A549 (cell line): ENCODE measurements at regions of chr15 and their contacts with region 1.

Region 1: DNA sequence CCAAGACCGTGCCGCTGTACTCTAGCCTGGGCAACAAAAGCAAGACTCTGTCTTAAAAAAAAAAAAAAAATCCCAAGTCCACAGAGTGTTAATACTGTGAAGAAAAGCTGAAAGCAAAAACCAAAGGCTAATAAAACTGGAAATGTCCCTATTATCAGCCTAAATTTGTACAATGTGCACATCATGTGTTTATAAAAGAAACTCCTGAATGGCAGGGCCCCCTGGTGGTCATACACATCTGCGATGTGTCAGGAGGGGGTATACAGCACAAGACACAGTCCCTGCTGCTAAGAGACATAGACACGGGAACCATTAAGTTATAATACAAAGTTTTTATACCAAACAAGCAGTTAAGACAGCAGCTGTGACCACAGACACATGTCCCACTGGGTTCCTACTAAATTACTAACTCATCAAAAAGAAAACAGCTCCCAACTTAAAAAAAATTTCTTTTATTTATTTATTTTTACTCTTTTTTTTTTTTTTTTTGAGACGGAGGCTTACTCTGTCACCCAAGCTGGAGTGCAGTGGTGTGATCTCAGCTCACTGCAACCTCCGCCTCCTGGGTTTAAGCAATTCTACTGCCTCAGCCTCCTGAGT is 31.0 kb downstream of the IDH2 start:
- DNase-seq: peak; percentile 84 to 89
- ATAC-seq: peak; percentile 76 to 87
- H3K4me3 ChIP-seq: no peak overlapping the region
- H3K27ac ChIP-seq: no peak overlapping the region
- H3K4me1 ChIP-seq: no peaks in the 10 kb centered on the region
- CTCF ChIP-seq: peak; percentile 89
- EP300 ChIP-seq: no peak
- POLR2A ChIP-seq: no peak
- RAD21 ChIP-seq: peak; percentile 74 to 87

Region 2: GRCh38 chr15:89740137-89740536 is 331.2 kb before region 1 on chr15:
- CTCF ChIA-PET with region 1: interaction called, 16 read pairs
- POLR2A ChIA-PET with region 1: no interaction called
- DNase-seq: peak; percentile 83 to 85
- ATAC-seq: peak; percentile 87 to 95
- H3K4me3 ChIP-seq: no peak overlapping the region
- H3K27ac ChIP-seq: peak overlapping the region in 1 of 2 experiments; percentile 36; a peak in 1 of 6 replicates
- H3K4me1 ChIP-seq: no peaks in the 10 kb centered on the region
- CTCF ChIP-seq: peak; percentile 96
- EP300 ChIP-seq: no peak
- POLR2A ChIP-seq: no peak
- RAD21 ChIP-seq: peak; percentile 89 to 95

Region 3: DNA sequence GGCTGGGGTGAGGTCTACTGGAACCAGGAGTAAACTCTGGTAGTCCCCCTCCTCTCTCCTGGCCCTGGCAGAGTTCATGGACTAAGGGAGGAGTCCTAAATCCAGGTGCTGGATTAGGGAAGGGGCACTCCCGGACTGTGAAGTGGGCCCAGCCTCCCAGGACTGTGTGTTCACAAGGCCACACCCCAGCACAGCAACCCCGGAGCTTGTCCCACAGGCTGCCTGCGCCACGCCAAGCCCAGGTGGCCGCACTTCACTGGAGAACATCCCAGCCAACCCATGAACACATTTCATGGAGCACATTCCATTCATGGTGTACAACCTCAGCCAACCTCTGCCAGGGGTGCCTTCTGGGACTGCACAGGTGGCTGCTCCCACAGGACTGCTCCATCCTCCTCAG is 166.8 kb before region 1 on chr15:
- CTCF ChIA-PET with region 1: interaction called, 60 read pairs
- POLR2A ChIA-PET with region 1: no interaction called
- DNase-seq: no peak
- ATAC-seq: no peak
- H3K4me3 ChIP-seq: no peak overlapping the region
- H3K27ac ChIP-seq: no peak overlapping the region
- H3K4me1 ChIP-seq: no peaks in the 10 kb centered on the region
- CTCF ChIP-seq: no peak
- EP300 ChIP-seq: no peak
- POLR2A ChIP-seq: no peak
- RAD21 ChIP-seq: no peak

Region 4: DNA sequence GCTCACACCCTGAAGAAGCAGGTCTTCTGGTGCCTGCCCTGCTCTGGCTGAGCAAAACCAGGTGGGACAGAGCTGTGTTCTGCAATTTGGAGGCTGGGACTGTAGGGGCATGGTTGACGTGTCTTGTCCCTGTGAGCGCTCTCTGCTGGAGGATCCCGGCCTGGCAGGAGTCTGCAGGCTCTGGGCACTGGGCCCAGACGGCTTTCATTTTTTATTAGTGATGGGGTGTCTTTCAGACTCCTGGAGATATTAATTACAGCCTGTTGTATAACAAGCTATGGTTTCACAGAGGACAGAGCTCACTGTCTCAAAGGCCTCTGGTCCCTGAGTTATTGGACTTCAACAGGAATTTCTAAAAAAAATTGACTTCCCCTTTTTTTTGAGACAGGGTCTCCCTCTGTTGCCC is 99.7 kb before region 1 on chr15:
- CTCF ChIA-PET with region 1: interaction called, 13 read pairs
- POLR2A ChIA-PET with region 1: no interaction called
- DNase-seq: peak; percentile 82 to 87
- ATAC-seq: peak; percentile 100
- H3K4me3 ChIP-seq: no peak overlapping the region
- H3K27ac ChIP-seq: no peak overlapping the region
- H3K4me1 ChIP-seq: no peaks in the 10 kb centered on the region
- CTCF ChIP-seq: peak; percentile 69
- EP300 ChIP-seq: no peak
- POLR2A ChIP-seq: no peak
- RAD21 ChIP-seq: peak; percentile 48 to 65

Region 5: DNA sequence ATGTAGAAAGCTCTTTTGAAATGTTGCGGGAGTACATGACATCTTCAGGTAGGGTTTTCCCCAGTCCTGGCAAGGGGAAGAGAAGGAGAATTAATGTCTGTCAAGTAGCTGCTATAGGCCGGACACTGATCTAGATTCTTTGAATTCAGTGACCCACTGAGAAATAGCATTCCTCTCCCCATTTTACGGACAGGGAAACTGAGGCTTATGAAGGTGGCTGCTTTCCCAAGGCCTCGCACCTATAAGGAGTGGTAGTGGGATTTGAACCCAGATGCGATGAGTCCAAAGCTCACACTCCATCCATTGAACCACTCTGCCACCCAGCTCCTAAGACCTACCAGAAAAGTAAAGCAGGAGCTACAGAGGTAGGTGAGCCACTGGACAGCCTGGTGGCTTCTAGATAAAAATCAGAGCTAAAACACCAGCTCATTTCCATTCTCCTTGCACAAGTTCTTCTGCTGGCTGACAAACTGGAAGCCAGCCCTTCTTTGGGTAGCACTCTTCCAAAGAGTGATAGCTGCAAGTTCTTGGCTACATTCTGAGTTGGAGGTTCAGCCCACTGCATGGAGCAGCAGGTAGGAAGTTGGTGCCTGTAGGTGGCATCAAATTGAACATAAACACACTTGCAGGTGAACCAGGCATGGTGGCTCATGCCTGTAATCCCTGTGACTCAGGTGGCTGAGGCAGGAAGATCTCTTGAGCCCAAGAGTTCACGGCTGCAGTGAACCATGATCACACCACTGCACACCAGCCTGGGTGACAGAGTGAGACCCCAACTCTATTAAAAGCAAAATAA is 48.2 kb before region 1 on chr15:
- CTCF ChIA-PET with region 1: interaction called, 12 read pairs
- POLR2A ChIA-PET with region 1: no interaction called
- DNase-seq: no peak
- ATAC-seq: no peak
- H3K4me3 ChIP-seq: no peak overlapping the region
- H3K27ac ChIP-seq: no peak overlapping the region
- H3K4me1 ChIP-seq: no peaks in the 10 kb centered on the region; the same call in 2 of the 3 replicates
- CTCF ChIP-seq: no peak
- EP300 ChIP-seq: no peak
- POLR2A ChIP-seq: no peak
- RAD21 ChIP-seq: no peak

Region 6: GRCh38 chr15:90047956-90048575 is 23.2 kb before region 1 on chr15:
- CTCF ChIA-PET with region 1: interaction called, 34 read pairs
- POLR2A ChIA-PET with region 1: no interaction called
- DNase-seq: no peak
- ATAC-seq: no peak
- H3K4me3 ChIP-seq: no peak overlapping the region
- H3K27ac ChIP-seq: no peak overlapping the region
- H3K4me1 ChIP-seq: no peaks in the 10 kb centered on the region
- CTCF ChIP-seq: no peak
- EP300 ChIP-seq: no peak
- POLR2A ChIP-seq: no peak
- RAD21 ChIP-seq: no peak

Region 7: GRCh38 chr15:90086868-90087268 is 15.6 kb after region 1 on chr15:
- CTCF ChIA-PET with region 1: interaction called, 66 read pairs
- POLR2A ChIA-PET with region 1: interaction called, 3 read pairs
- DNase-seq: peak; percentile 68 to 79
- ATAC-seq: peak; percentile 74 to 84; a peak in 5 of 6 replicates
- H3K4me3 ChIP-seq: no peak overlapping the region
- H3K27ac ChIP-seq: 0 out of 6 replicates have a peak overlapping the region, but pooled peaks of 1 of the 2 experiments have one; percentile 13
- H3K4me1 ChIP-seq: peaks cover 7% of the 10 kb centered on the region; the same call in 1 of the 3 replicates
- CTCF ChIP-seq: peak; percentile 79
- EP300 ChIP-seq: no peak
- POLR2A ChIP-seq: no peak
- RAD21 ChIP-seq: peak; percentile 79 to 94